HEK293 (cell line): ENCODE measurements at regions of chr20 and their contacts with region 1.

Region 1: DNA sequence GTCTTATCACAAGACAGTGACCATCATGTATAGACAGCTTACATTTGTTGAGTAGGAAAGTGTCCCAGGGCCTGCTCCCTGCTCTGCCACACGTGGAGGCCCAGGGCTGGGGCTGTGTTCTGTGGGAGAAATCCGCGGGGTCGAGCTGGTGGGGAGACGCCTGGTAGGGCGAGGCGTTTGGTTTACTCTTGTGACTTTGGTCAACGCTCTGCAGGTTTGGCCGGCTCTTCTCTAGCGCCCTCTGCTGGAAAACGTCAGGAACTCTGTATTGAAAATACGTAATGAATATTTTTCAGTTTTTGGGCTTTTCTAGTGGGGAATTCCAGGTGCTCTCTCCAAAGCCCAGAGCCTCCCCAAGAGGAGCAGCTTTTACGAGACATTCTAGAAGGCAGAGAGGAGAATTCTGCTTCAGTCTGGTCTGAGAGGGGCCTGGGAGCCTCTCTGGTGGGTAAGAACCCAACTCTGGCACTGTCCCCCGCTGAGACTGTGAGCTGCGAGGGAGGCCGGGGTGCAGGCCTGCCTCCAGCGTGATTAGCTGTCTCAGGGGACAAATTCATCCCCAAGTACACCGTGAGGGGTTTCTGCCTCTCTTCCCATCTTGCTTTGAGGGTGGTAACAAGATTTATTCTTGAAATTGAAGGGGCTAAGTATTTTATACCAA is 112.6 kb upstream of the RALGAPA2 start:
- H3K4me3 ChIP-seq: no peak overlapping the region
- H3K27ac ChIP-seq: no peak overlapping the region
- H3K4me1 ChIP-seq: no peaks in the 10 kb centered on the region
- CTCF ChIP-seq: peak; percentile 51

Region 2: DNA sequence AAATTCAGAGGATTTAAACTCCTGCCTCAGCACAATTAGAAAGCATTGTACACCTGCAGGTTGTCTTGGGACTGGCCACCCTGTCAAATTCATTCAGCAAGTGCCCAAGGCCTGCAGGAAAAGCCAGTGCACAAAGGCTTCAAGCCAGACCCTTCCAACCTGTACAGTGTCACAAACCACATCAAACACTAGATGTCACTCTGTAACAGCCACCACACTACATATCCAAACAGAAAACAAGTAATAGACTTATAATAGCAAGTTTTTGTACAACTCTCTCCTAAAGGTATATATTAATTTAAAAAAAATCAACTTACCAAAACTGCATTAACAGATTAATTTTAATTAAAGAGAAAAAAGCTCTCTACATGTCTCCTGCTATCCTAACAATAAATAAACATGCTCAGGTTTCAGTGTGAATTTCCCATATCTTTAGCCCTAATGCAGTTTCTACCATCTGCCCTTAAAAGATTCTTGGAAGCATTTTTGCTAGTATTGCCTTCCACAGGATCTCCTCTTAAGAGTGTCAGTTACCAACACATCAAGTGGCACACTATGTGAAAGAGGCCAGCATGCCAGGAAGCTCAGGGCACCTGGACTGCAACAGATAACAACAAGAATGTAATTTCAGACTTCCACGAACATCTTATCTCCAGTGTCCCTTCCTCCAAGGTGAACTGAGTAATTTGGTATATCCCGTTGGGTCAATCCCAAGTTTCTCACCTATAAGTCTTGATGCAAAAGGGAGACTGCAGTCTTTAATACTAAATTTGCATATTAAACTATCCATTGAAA is 160.1 kb before region 1 on chr20:
- CTCF ChIA-PET with region 1: interaction called, 41 read pairs
- POLR2A ChIA-PET with region 1: no interaction called
- H3K4me3 ChIP-seq: no peak overlapping the region
- H3K27ac ChIP-seq: no peak overlapping the region
- H3K4me1 ChIP-seq: peaks cover 3% of the 10 kb centered on the region; the same call in 1 of the 2 replicates
- CTCF ChIP-seq: peak; percentile 53; the same call in 1 of the 2 replicates

Region 3: DNA sequence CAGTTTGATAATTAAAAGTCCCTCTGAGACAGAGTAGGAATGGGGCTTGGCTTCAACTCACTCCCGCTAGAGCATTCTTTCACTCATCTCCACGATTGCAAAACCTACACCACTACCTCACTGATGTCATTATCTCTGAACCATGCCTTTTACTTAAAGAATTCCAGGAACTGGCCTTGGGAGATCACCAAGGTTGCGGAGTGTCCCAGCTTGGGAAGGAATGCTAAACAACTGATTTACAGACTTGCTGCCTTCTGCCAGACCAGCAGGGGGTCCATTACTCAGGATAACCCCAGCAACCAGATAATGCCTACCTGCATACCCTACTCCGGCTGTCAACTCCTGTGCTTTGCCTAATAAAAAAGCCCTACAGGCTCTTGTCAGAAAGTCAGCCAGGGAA is 10.4 kb before region 1 on chr20:
- CTCF ChIA-PET with region 1: interaction called, 10 read pairs
- POLR2A ChIA-PET with region 1: no interaction called
- H3K4me3 ChIP-seq: no peak overlapping the region
- H3K27ac ChIP-seq: no peak overlapping the region
- H3K4me1 ChIP-seq: no peaks in the 10 kb centered on the region
- CTCF ChIP-seq: no peak